ENCODE measurements at regions of chr3 and their contacts with region 1.

Region 1: DNA sequence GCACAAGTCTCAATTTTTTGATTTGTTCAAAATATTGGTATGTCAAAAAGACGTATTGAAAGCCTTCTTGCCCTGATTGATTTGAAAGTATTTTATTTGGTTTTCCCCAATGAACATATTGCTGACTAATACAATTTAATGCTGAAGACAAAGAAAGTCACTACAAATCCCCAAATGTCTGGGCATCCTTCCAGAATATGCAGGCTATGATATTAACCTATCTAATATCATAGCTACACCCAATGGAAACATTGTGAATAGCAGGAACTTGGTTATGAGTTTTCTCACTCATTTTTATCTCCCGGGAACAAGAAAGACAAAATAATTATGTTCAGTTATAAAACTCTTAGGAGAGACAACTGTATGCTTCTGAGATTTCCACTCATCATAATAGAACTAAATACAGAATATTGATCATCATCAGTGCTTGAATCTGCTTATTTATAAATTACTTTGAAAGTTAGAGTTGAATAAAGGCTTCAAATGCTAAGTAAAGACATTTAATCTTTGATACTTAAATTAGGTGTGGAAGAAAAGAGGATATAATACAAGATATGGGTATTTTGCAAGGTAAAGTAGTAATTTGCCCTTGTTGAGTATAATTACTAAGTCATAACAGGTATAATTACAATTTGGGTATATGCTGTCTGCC is 483.9 kb downstream of the RBMS3 start:
- DNase-seq: peak in 1 of 2 donors; percentile 74
- ATAC-seq: peak in 7 of 8 donors; percentile 61 to 77 (median 73)
- H3K4me3 ChIP-seq: no peak overlapping the region
- H3K27ac ChIP-seq: peak overlapping the region in 1 of 10 donors; percentile 13
- H3K4me1 ChIP-seq: peaks cover 1 to 40% (median 32%) of the 10 kb centered on the region in 9 donors
- H3K27me3 ChIP-seq: no peaks in the 10 kb centered on the region
- CTCF ChIP-seq: peak; percentile 63 to 88 (median 67)

Region 2: GRCh38 chr3:28667646-28668621 is 1096.8 kb before region 1 on chr3:
- intact Hi-C with region 1: loop called in 2 of 10 experiments (anchors 10 kb)
- DNase-seq: peak; percentile 22 to 62
- ATAC-seq: peak; percentile 82 to 97 (median 93)
- H3K4me3 ChIP-seq: no peak overlapping the region
- H3K27ac ChIP-seq: peak overlapping the region in 8 of 10 donors; percentile 8 to 71 (median 58)
- H3K4me1 ChIP-seq: peaks cover 0 to 24% (median 3%) of the 10 kb centered on the region in 9 donors
- H3K27me3 ChIP-seq: no peaks in the 10 kb centered on the region
- CTCF ChIP-seq: peak; percentile 62 to 84 (median 81)

Region 3: GRCh38 chr3:29144807-29145206 is 619.9 kb before region 1 on chr3:
- intact Hi-C with region 1: loop called in 6 of 10 experiments (anchors 5 to 10 kb)
- DNase-seq: peak; percentile 10 to 62
- ATAC-seq: peak in 7 of 8 donors; percentile 68 to 85 (median 75)
- H3K4me3 ChIP-seq: no peak overlapping the region
- H3K27ac ChIP-seq: no peak overlapping the region
- H3K4me1 ChIP-seq: peaks cover 0 to 32% (median 19%) of the 10 kb centered on the region in 9 donors
- H3K27me3 ChIP-seq: no peaks in the 10 kb centered on the region
- CTCF ChIP-seq: peak in 8 of 9 donors; percentile 10 to 66 (median 43)

Region 4: GRCh38 chr3:29525254-29525881 is 239.4 kb before region 1 on chr3:
- intact Hi-C with region 1: loop called in 5 of 10 experiments (anchors 5 to 10 kb)
- DNase-seq: peak; percentile 32 to 75
- ATAC-seq: peak; percentile 91 to 96 (median 94)
- H3K4me3 ChIP-seq: peak overlapping the region in 1 of 10 donors; percentile 6
- H3K27ac ChIP-seq: peak overlapping the region; percentile 32 to 86 (median 68)
- H3K4me1 ChIP-seq: peaks cover 11 to 66% (median 35%) of the 10 kb centered on the region in 9 donors
- H3K27me3 ChIP-seq: no peaks in the 10 kb centered on the region
- CTCF ChIP-seq: no peak

Region 5: GRCh38 chr3:29693863-29694262 is 70.9 kb before region 1 on chr3:
- intact Hi-C with region 1: loop called in 3 of 10 experiments (anchors 5 to 10 kb)
- DNase-seq: no peak
- ATAC-seq: peak in 3 of 8 donors; percentile 47 to 53 (median 51)
- H3K4me3 ChIP-seq: no peak overlapping the region
- H3K27ac ChIP-seq: peak overlapping the region in 7 of 10 donors; percentile 53 to 89 (median 74)
- H3K4me1 ChIP-seq: peaks cover 3 to 47% (median 42%) of the 10 kb centered on the region in 9 donors
- H3K27me3 ChIP-seq: no peaks in the 10 kb centered on the region
- CTCF ChIP-seq: no peak